KBM-7 (cell line): ENCODE measurements at regions of chr15 and their contacts with region 1.

Region 1: DNA sequence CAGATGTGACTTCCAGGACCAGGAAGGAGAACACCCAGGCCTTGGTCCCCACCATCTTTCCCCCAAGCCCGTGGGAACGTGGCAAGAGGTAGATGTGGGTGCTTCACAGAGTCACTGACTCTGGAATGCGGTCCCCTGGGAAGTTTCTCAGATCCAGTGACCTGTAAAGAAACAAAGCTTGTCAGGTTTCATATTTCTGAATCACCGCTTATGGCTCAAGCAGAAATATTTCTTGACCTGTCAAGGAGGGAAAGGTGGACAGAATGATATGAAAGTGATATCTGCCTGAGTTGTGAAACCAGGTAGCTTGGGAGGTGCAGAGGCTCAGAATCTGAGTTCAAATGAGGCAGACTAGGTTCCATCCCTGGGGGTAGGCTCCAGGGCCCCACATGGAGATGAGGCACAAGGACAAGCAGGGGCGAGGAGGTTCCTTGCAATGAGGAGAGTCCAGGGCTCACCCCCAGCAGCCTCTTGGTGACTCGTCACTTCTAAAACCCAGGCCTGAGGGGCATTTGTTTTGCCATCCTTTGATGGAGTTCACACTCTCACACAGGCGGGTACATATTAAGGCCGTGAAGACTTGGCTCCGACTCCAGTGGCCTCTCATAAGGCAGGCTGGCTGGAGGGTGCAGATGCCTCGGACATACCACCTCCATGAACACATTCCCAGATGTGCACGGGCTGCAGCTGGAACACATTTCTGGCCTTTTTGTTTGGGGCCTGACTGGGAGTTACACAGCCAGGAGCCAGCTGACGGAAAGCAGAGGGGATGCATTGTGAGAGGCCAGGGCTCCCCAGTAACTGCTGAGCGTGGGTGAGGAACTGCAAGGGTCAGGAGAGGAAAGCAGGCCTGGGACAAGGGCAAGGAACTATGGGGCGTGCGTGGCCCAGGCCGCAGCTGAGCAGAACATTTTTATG is 1.3 kb downstream of the CILP start:
- DNase-seq: no peak

Region 2: GRCh38 chr15:65275728-65276126 is 65.8 kb after region 1 on chr15:
- in situ Hi-C with region 1: loop called (anchors 10 kb)
- DNase-seq: no peak